Motor neuron (in vitro differentiated cells): ENCODE measurements at regions of chr17 and their contacts with region 1.

Region 1: GRCh38 chr17:73429440-73430164 is 117.8 kb upstream of the CDC42EP4 start:
- ATAC-seq: peak; percentile 87 to 97 (median 94)
- H3K4me3 ChIP-seq: no peak overlapping the region
- H3K27ac ChIP-seq: no peak overlapping the region
- H3K4me1 ChIP-seq: peaks cover 6 to 7% of the 10 kb centered on the region in 2 donors

Region 2: GRCh38 chr17:73645050-73645978 is 215.7 kb after region 1 on chr17:
- in situ Hi-C with region 1: loop called in 3 of 9 experiments (anchors 25 kb)
- ATAC-seq: peak; percentile 47 to 82 (median 72)
- H3K4me3 ChIP-seq: peak overlapping the region; percentile 50 to 88 (median 69)
- H3K27ac ChIP-seq: peak overlapping the region; percentile 27 to 91
- H3K4me1 ChIP-seq: peaks cover 34 to 36% of the 10 kb centered on the region in 2 donors

Region 3: DNA sequence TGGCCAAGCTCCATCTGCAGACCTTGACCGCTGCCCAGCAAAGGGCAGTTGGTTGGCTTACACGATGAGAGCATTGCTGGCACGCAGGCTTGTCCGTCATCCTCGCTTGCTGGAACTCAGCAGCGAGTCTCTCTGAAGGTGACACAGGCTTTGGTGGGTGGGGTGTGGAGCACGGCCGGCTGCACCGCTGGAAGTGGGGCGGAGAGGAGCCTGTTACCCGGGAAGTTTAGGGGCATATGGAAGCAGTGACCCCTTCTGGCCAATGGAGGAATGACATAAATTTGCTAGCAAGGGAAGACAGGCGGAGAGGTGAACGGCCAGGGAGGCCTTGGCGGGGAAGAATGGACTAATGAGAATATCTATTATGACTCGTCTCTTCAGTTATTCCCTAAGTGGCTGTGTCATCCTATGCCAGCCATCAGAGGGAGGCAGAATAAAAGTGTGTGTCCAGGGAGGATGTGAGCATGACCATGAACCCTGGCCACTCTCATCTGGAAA is 280.5 kb after region 1 on chr17:
- in situ Hi-C with region 1: loop called in 2 of 9 experiments (anchors 25 kb)
- ATAC-seq: peak; percentile 12 to 89 (median 54)
- H3K4me3 ChIP-seq: no peak overlapping the region
- H3K27ac ChIP-seq: no peak overlapping the region
- H3K4me1 ChIP-seq: peaks cover 28 to 35% of the 10 kb centered on the region in 2 donors

Region 4: GRCh38 chr17:73855720-73856333 is 426.2 kb after region 1 on chr17:
- in situ Hi-C with region 1: no loop called
- ATAC-seq: peak in 3 of 8 experiments; percentile 28 to 85 (median 56)
- H3K4me3 ChIP-seq: no peak overlapping the region
- H3K27ac ChIP-seq: no peak overlapping the region
- H3K4me1 ChIP-seq: peaks cover 28 to 34% of the 10 kb centered on the region in 2 donors

Region 5: GRCh38 chr17:73956669-73957465 is 527.3 kb after region 1 on chr17:
- in situ Hi-C with region 1: loop called in 2 of 9 experiments (anchors 25 kb)
- ATAC-seq: peak in 7 of 8 experiments; percentile 2 to 79 (median 25)
- H3K4me3 ChIP-seq: no peak overlapping the region
- H3K27ac ChIP-seq: peak overlapping the region; percentile 14 to 45
- H3K4me1 ChIP-seq: peaks cover 24 to 30% of the 10 kb centered on the region in 2 donors

Region 6: GRCh38 chr17:73998653-73999645 is 569.3 kb after region 1 on chr17:
- in situ Hi-C with region 1: loop called in 1 of 9 experiments (anchors 25 kb)
- ATAC-seq: peak; percentile 76 to 92 (median 88)
- H3K4me3 ChIP-seq: no peak overlapping the region
- H3K27ac ChIP-seq: peak overlapping the region in 1 of 2 donors; percentile 20
- H3K4me1 ChIP-seq: peaks cover 21 to 23% of the 10 kb centered on the region in 2 donors

Region 7: DNA sequence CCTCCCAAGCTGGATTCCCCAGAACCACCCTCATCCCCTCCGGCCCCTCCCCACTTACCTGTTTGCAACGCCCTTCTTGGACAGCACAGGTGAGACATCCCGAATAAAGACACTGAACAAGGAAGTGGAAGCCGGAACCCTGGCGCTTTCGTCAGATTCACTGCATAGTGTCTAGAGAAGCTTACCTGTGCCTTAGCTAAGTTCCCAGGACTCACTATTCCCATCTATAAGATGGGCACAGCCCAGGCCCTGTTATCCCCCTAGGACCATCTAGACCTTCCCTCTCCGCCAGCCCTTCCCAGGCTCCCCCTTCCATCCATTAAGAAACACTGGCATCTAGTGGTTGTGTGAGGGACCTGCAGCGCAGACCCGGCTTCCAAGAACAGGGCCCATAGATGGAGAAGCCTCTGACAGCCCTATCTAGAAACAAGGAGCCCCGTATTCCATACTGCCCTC is 747.0 kb after region 1 on chr17:
- in situ Hi-C with region 1: loop called in 5 of 9 experiments (anchors 25 kb)
- ATAC-seq: peak; percentile 67 to 97 (median 78)
- H3K4me3 ChIP-seq: no peak overlapping the region
- H3K27ac ChIP-seq: no peak overlapping the region
- H3K4me1 ChIP-seq: peaks cover 7 to 16% of the 10 kb centered on the region in 2 donors